Motor neuron (in vitro differentiated cells): ENCODE measurements at regions of chr14 and their contacts with region 1.

Region 1: GRCh38 chr14:24431569-24432258 is 2.0 kb downstream of the KHNYN start:
- ATAC-seq: peak; percentile 15 to 63 (median 28)
- H3K4me3 ChIP-seq: no peak overlapping the region
- H3K27ac ChIP-seq: no peak overlapping the region
- H3K4me1 ChIP-seq: peaks cover 4 to 11% of the 10 kb centered on the region in 2 donors

Region 2: GRCh38 chr14:24241829-24242443 is 189.8 kb before region 1 on chr14:
- in situ Hi-C with region 1: loop called in 1 of 9 experiments (anchors 10 kb)
- ATAC-seq: peak; percentile 69 to 88 (median 81)
- H3K4me3 ChIP-seq: peak overlapping the region; percentile 50 to 82 (median 66)
- H3K27ac ChIP-seq: peak overlapping the region; percentile 94 to 97
- H3K4me1 ChIP-seq: peaks cover 12 to 27% of the 10 kb centered on the region in 2 donors

Region 3: GRCh38 chr14:24332268-24332993 is 99.3 kb before region 1 on chr14:
- in situ Hi-C with region 1: loop called (anchors 5 to 25 kb)
- ATAC-seq: peak; percentile 25 to 87 (median 80)
- H3K4me3 ChIP-seq: peak overlapping the region; percentile 5 to 16 (median 8)
- H3K27ac ChIP-seq: no peak overlapping the region
- H3K4me1 ChIP-seq: peaks cover 0 to 6% of the 10 kb centered on the region in 2 donors